ENCODE measurements at regions of chr11 and their contacts with region 1.

Region 1: GRCh38 chr11:6353367-6353987 is 33.2 kb upstream of the CAVIN3 start:
- DNase-seq: peak in 35 of 42 donors; percentile 12 to 72 (median 32)

Region 2: GRCh38 chr11:6022956-6023355 is 330.5 kb before region 1 on chr11:
- intact Hi-C with region 1: loop called (anchors 10 kb)
- DNase-seq: peak in 16 of 42 donors; percentile 4 to 56 (median 22)

Region 3: DNA sequence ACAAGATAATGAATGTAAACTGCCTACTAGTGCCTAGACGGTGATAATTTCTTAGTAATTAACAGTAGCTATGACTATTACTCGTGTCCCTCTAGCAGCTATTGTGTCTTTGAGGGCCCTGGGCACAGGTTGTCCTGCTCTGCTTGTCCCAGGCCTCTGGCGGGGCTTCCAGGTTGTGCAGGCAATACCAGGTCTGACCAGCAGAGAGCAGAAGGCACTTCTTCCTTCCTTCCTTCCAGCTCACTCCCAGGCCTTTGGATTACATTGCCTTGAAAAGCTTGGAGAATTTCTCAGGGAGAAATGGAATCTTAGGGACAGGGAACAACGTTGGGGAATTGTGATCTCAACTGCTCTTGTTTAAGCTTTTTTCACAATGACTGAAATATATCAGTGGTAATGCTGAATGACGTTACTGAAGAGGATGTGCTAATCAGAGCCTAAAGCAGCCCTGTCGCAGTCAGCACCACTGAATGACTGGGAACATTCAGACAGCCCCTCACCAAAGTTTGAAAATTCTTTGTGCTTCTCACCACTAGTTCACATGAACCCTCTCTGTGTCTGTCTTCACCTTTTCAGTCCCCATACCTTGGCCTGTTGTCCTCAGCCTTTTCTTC is 102.2 kb before region 1 on chr11:
- intact Hi-C with region 1: loop called (anchors 10 kb)
- DNase-seq: peak in 38 of 42 donors; percentile 38 to 84 (median 66)

Measured in head of caudate nucleus (tissue), 42 donors.